Activated T-helper 1 cell treated with anti-CD3 and anti-CD28 coated beads, Interleukin-12 subunit alpha, Interleukin-12 subunit beta, Interleukin-2, Interleukin-4 antibody, amounts not matched to agents 30 ng/mL and 10 ng/mL and 1 ng/mL, durations not matched to agents 14 hours and 24 hours and 36 hours (primary cell): ENCODE measurements at regions of chr12 and their contacts with region 1.

Region 1: GRCh38 chr12:56224102-56224701 is at the start of gene NABP2:
- DNase-seq: peak; percentile 94
- H3K4me3 Mint-ChIP-seq: peak within 1 kb of the TSS; percentile 99
- H3K27ac Mint-ChIP-seq: peak within 1 kb of the TSS; percentile 81
- H3K4me1 Mint-ChIP-seq: peaks cover 51% of the 10 kb centered on the region
- H3K27me3 Mint-ChIP-seq: no peaks in the 10 kb centered on the region
- total RNA-seq, gene NABP2: 97.5 and 102 TPM in 2 replicates

Region 2: DNA sequence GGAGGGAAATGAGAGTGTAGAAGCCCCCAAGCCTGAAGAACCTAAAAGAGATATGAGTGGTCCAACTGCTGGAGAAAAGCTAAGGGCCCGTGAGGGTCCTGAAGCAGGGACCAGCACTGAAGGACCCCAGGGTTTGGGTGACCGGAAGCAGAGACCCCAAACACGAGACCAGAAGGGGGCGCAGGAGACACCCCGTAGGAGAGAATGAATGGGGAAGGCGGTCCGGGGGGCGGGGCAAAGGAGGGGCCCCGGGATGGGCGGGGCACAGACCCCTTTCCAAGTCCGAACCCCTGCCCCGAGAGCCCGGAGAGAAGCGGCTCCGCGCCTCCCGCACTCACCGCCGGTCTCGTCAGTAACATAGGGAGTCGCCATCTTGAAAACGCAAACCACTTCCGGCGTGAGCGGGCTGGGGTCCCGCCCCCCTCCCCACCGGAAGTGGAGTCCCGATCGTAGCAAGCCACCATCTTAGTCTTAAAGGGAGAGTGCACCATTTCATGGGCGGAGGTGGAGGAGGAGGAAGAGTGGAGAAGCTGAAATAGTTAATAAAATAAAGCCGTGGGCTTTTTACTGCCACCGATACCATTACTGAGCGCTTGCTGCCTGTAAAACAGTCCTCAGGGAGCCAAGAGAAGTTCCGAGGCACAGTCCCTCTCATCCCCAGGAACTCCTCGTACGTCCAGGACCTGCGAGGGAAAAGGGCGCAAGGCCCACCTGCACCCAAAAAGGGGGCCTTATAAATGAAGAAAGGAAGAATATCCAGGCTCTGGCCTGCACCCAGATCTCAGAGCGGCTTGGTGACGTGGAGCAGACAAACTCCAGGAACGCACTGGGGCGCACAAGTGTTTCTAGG is 297.2 kb before region 1 on chr12:
- intact Hi-C with region 1: loop called (anchors 5 kb)
- DNase-seq: peak; percentile 85
- H3K4me3 Mint-ChIP-seq: peak overlapping the region; percentile 90
- H3K27ac Mint-ChIP-seq: peak overlapping the region; percentile 96
- H3K4me1 Mint-ChIP-seq: peaks cover 52% of the 10 kb centered on the region
- H3K27me3 Mint-ChIP-seq: no peaks in the 10 kb centered on the region

Region 3: GRCh38 chr12:56127888-56128669 is 96.1 kb before region 1 on chr12 and contains the start of gene ESYT1:
- intact Hi-C with region 1: loop called (anchors 1 kb)
- DNase-seq: peak; percentile 98
- H3K4me3 Mint-ChIP-seq: peak within 1 kb of the TSS; percentile 97
- H3K27ac Mint-ChIP-seq: peak within 1 kb of the TSS; percentile 94
- H3K4me1 Mint-ChIP-seq: peaks cover 62% of the 10 kb centered on the region
- H3K27me3 Mint-ChIP-seq: no peaks in the 10 kb centered on the region
- total RNA-seq, gene ESYT1: 159 and 161 TPM in 2 replicates

Region 4: GRCh38 chr12:56206457-56207166 is 17.6 kb before region 1 on chr12:
- intact Hi-C with region 1: loop called (anchors 1 kb)
- DNase-seq: no peak
- H3K4me3 Mint-ChIP-seq: no peak overlapping the region
- H3K27ac Mint-ChIP-seq: no peak overlapping the region
- H3K4me1 Mint-ChIP-seq: no peaks in the 10 kb centered on the region
- H3K27me3 Mint-ChIP-seq: no peaks in the 10 kb centered on the region

Region 5: DNA sequence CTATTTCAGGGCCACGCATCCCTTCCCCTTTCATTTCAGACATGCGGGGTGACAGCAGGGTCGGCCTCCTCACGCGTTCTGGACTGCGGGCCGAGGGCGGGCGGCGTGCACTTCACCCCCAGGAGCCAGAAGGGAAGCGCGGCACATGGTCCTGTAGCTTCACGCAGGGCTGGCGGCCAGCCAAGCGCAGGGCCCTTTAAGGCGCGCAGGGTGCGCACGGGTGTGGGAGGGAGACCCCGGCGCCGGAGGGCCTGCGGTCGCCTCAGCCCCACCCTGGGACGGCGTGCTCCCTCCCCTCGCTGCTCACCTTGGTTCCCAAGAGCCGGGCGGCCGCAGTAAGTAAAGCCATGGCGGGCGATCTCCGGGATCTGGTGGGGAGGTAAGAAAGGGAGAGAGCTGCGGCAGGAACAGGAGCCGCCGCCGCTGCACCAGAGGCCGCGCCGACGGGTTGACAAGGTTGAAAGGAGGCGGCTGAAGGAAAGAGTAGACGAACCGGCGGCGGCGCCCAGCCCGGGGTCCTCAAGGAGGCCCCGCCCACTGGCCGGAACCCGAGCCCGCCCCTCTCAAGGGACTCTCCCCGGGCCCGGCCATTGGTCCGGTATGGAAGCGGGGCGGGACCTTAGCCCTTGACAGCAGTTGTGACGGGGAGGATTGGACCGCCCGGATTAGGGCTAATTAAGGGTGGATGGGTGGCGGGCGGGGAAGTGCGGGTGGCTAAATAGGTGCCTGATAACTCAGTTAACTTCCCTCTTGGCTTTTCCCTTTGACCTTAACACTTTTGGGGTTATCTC is 75.8 kb after region 1 on chr12 and contains the start of gene CS:
- intact Hi-C with region 1: loop called (anchors 1 kb)
- DNase-seq: peak; percentile 98
- H3K4me3 Mint-ChIP-seq: peak within 1 kb of the TSS; percentile 98
- H3K27ac Mint-ChIP-seq: peak within 1 kb of the TSS; percentile 90
- H3K4me1 Mint-ChIP-seq: peaks cover 51% of the 10 kb centered on the region
- H3K27me3 Mint-ChIP-seq: no peaks in the 10 kb centered on the region
- total RNA-seq, gene CS: 269 and 280 TPM in 2 replicates

Region 6: DNA sequence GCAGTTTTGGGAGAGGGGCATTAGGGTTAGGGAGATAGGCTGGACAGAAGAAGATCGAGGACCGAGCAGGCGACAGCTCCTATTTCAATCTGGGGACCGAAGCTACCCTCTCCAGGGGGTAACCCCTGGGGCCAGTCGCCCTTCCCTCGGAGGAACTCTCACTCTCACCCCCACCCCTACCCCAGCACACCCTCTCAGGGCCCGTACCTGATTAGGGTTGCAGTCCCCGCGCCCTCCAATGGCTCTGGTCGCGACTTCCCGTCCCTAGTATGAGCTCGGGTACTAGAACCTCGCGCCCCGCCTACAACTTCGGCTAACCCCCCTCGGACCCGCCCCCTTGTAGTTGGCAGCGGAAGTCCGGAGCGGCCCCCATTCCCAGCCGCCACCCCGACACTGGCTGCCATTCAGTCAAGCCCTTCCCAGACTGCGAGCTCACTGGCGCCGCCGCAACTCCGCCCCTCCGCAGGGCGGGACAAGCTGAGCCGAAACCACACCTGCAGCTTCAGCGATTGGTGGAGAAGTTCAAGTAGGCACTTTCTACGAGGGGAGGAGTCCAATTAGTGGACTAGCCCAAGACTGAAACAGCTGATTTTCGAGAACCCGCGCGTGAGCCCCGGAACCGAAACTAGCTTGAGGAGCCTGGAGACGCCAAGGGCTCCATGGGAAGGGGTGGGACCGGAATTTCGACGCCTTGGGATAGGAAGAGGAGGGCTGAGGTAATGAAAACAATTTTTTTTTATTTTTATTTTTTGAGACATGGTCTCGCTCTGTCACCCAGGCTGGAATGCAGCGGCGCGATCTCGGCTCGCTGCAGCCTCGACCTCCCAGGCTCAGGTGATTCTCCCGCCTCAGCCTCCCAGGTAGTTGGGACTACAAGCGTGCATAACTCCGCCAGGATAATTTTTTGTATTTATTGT is 135.9 kb after region 1 on chr12 and contains the start of gene STAT2:
- intact Hi-C with region 1: loop called (anchors 1 kb)
- DNase-seq: peak; percentile 100
- H3K4me3 Mint-ChIP-seq: peak within 1 kb of the TSS; percentile 97
- H3K27ac Mint-ChIP-seq: peak within 1 kb of the TSS; percentile 97
- H3K4me1 Mint-ChIP-seq: peaks cover 29% of the 10 kb centered on the region
- H3K27me3 Mint-ChIP-seq: no peaks in the 10 kb centered on the region
- total RNA-seq, gene STAT2: 70.2 and 71.3 TPM in 2 replicates

Region 7: DNA sequence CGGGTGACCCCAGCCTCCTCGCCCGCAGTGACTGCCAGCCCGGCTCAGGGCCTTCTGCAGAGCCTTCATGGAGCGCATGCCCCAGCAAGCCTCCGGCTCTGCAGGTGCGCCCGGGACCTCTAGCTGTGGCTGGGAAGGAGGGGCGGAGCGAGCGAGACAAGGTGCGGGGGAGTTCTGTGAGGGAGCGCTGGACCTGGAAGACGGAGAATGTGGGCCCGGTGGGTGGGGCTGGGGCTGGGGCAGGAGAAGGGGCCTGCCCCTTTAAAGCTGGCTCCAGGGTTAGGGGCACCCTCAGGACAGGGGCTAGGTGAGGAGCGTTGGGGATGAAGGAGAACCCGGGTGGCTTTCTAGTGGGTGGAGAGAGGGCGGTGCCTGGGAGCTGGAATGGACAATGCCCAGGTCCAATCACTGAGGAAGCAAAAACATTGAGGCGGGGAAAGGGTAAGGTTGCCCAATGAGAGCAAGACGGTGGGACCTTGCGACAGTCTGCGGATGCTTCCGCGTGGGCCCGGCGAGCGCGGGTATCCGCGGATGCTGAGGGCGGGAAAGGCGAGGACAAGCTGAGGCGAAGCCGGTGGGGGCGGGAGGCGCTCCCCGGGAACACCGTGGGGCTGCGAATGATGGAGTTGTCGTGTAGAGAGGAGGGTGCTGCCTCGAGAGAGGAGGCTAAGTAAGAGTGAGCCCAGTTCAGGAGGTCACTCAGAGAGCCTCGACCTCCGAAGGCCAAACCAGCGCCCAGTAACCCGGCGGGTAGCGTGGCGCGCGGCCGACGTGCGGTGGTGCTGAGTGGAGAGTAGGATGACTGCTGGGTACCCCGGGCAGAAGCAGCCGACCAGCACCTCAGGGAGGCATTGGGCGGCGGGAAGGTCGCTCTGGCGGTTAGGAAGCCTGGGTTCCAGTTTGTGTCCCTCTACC is 264.1 kb after region 1 on chr12 and contains the start of gene GLS2:
- intact Hi-C with region 1: no loop called
- DNase-seq: peak; percentile 60
- H3K4me3 Mint-ChIP-seq: peak within 1 kb of the TSS; percentile 85
- H3K27ac Mint-ChIP-seq: no peak within 1 kb of the TSS
- H3K4me1 Mint-ChIP-seq: peaks cover 22% of the 10 kb centered on the region
- H3K27me3 Mint-ChIP-seq: peaks cover 48% of the 10 kb centered on the region
- total RNA-seq, gene GLS2: 1.5 and 2.6 TPM in 2 replicates